ENCODE measurements at regions of chr3 and their contacts with region 1.

Region 1: DNA sequence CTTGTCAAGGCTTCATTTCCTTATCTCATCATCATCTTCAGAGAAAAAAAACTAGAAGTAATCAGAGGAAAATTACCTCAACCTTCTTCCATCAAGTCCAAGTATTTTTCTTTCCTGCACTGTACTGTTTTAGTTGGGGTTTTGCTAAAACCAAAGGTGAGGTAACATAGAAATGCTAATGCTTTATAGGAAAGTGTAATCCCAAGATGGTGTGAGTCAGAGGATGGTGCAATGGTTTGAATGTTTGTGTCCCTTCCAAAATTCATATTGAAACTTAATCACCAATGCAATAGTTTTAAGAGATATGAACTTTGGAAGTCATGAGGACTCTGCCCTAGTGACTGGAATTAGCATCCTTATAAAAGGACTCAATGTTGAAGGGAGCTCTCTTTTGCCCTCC is 79.5 kb downstream of the KBTBD8 start:
- DNase-seq: no peak
- ATAC-seq: no peak
- H3K4me3 Mint-ChIP-seq: no peak overlapping the region
- H3K27ac Mint-ChIP-seq: no peak overlapping the region
- H3K4me1 Mint-ChIP-seq: peaks cover 17% of the 10 kb centered on the region
- H3K27me3 Mint-ChIP-seq: no peaks in the 10 kb centered on the region
- CTCF ChIP-seq: no peak

Region 2: GRCh38 chr3:65979162-65979561 is 1098.5 kb before region 1 on chr3:
- CTCF ChIA-PET with region 1: no interaction called
- POLR2A ChIA-PET with region 1: no interaction called
- intact Hi-C with region 1: no loop called
- DNase-seq: no peak
- ATAC-seq: no peak
- H3K4me3 Mint-ChIP-seq: no peak overlapping the region
- H3K27ac Mint-ChIP-seq: no peak overlapping the region
- H3K4me1 Mint-ChIP-seq: no peaks in the 10 kb centered on the region
- H3K27me3 Mint-ChIP-seq: no peaks in the 10 kb centered on the region
- CTCF ChIP-seq: no peak

Region 3: DNA sequence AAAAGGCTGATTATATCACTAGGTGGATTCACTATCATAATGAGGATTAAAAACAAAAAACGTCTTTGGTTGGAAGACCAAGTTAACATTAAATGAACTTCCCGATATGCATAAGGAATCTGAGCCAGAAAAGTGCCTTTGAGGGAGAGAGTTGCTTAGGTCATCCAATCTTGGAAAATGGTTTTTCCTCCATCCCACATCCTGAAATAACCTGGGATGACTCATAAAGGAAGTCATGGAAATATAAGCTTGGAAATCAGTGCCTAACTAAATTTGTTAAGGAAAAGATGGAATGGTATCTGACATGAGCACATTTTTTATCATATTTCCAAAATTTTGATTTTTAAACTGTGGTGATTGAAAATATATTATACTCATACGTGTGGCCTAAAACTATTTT is 13.6 kb before region 1 on chr3:
- CTCF ChIA-PET with region 1: no interaction called
- POLR2A ChIA-PET with region 1: no interaction called
- intact Hi-C with region 1: loop called (anchors 2 kb)
- DNase-seq: no peak
- ATAC-seq: no peak
- H3K4me3 Mint-ChIP-seq: no peak overlapping the region
- H3K27ac Mint-ChIP-seq: no peak overlapping the region
- H3K4me1 Mint-ChIP-seq: peaks cover 19% of the 10 kb centered on the region
- H3K27me3 Mint-ChIP-seq: no peaks in the 10 kb centered on the region
- CTCF ChIP-seq: no peak

Region 4: DNA sequence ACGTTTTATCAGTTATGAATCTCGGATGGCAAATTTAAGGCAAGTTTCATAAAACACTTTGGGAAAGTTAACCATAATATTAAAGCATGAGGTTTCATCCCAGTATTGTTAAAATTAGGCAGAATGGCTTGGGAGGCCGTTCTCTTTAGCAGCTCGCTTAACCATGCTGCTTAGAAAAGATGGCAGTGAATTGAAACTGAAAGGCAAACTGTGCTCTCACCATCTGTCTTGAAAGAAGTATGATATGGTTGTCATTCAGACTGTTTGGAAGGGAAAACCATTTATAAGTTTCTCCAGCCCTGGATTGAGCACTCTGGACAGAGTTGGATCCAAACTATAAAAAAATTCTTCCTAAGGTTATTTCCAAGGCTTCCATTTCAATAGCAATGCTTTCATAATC is 909.0 kb after region 1 on chr3:
- CTCF ChIA-PET with region 1: no interaction called
- POLR2A ChIA-PET with region 1: no interaction called
- intact Hi-C with region 1: no loop called
- DNase-seq: no peak
- ATAC-seq: no peak
- H3K4me3 Mint-ChIP-seq: no peak overlapping the region
- H3K27ac Mint-ChIP-seq: no peak overlapping the region
- H3K4me1 Mint-ChIP-seq: no peaks in the 10 kb centered on the region
- H3K27me3 Mint-ChIP-seq: no peaks in the 10 kb centered on the region
- CTCF ChIP-seq: no peak

Measured in activated B cell treated with CpG ODN at 0.5 μM for 24 hours (primary cell).